Activated CD8-positive, alpha-beta T cell treated with anti-CD3 and anti-CD28 coated beads for 36 hours (primary cell): ENCODE measurements at regions of chr5 and their contacts with region 1.

Region 1: GRCh38 chr5:126370796-126371718 is 52.2 kb upstream of the GRAMD2B start:
- DNase-seq: no peak
- ATAC-seq: no peak
- H3K4me3 Mint-ChIP-seq: no peak overlapping the region
- H3K27ac Mint-ChIP-seq: no peak overlapping the region
- H3K4me1 Mint-ChIP-seq: peaks cover 16% of the 10 kb centered on the region
- H3K27me3 Mint-ChIP-seq: no peaks in the 10 kb centered on the region
- CTCF ChIP-seq: no peak

Region 2: DNA sequence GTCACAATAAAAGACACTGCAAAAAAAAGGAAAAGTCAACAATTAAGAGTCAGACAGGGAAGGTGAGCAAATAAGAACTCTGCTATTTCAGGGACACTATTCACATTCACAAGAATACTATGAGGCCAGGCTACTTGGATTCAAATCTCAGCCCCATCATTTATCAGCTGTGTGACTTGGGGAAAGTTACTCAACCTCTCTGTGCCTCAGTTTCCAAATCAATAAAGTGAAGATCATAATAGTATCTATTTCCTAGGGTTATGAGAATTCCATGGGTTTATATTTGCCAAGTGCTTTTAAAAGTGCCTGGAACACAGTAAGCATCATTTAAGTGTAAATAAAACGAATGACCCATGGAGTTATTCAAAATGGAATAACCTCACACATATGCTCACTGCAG is 167.5 kb after region 1 on chr5:
- CTCF ChIA-PET with region 1: interaction called, 10 read pairs
- POLR2A ChIA-PET with region 1: no interaction called
- intact Hi-C with region 1: no loop called
- DNase-seq: no peak
- ATAC-seq: no peak
- H3K4me3 Mint-ChIP-seq: no peak overlapping the region
- H3K27ac Mint-ChIP-seq: no peak overlapping the region
- H3K4me1 Mint-ChIP-seq: no peaks in the 10 kb centered on the region
- H3K27me3 Mint-ChIP-seq: no peaks in the 10 kb centered on the region
- CTCF ChIP-seq: no peak